Pancreas (tissue), 10 donors: ENCODE measurements at regions of chr16 and their contacts with region 1.

Region 1: DNA sequence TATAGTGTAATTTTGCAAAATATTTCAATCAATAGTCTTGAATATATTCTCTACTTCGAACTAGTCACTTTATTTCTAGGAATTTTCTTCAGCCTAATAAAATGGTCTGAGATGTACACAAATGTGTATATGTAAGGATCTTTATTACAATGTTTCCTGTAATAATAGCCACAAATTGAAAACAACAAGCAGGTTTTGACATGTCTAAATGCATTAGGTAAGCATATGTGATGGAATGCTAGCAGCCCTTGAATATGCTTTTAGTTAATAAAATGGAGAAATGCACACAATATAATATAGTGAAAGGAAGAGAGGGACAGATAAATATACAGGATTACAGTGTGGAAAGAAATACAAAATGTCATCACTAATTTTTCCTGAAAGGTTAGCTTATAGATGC is 196.5 kb upstream of the IRX5 start:
- DNase-seq: no peak
- ATAC-seq: no peak
- H3K4me3 ChIP-seq: no peak overlapping the region
- H3K27ac ChIP-seq: no peak overlapping the region
- H3K4me1 ChIP-seq: no peaks in the 10 kb centered on the region
- H3K27me3 ChIP-seq: peaks cover 0 to 6% (median 0%) of the 10 kb centered on the region in 4 donors
- CTCF ChIP-seq: no peak

Region 2: DNA sequence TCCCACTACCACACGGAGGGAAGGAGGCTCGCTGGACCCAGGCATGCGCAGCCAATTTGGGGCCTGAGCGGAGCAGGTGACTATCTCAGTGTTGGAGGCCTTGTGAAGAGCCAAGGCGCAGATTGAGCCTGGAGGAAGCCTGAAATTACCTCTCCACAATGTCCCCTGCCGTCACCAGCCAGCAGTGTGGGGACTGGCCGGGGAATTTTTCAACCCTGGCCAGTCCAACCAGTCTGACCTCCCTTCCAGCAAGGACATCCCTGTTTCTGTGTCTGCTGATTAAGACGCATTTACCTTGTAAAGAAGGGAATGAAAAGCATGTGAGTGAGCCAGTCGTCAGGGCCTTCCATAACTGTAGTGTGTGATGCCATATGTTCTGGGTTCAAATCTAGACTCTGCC is 249.5 kb before region 1 on chr16:
- intact Hi-C with region 1: no loop called
- DNase-seq: no peak
- ATAC-seq: peak in 1 of 4 donors; percentile 57
- H3K4me3 ChIP-seq: no peak overlapping the region
- H3K27ac ChIP-seq: no peak overlapping the region
- H3K4me1 ChIP-seq: peaks cover 0 to 7% (median 0%) of the 10 kb centered on the region in 3 donors
- H3K27me3 ChIP-seq: no peaks in the 10 kb centered on the region
- CTCF ChIP-seq: no peak

Region 3: GRCh38 chr16:54677561-54677960 is 56.6 kb before region 1 on chr16:
- intact Hi-C with region 1: loop called in 1 of 3 experiments (anchors 10 kb)
- DNase-seq: no peak
- ATAC-seq: no peak
- H3K4me3 ChIP-seq: no peak overlapping the region
- H3K27ac ChIP-seq: no peak overlapping the region
- H3K4me1 ChIP-seq: no peaks in the 10 kb centered on the region
- H3K27me3 ChIP-seq: no peaks in the 10 kb centered on the region
- CTCF ChIP-seq: no peak